ENCODE measurements at regions of chr4 and their contacts with region 1.

Region 1: GRCh38 chr4:86924811-86925210 is 10.0 kb upstream of the AFF1 start:
- DNase-seq: no peak
- ATAC-seq: no peak
- H3K4me3 Mint-ChIP-seq: no peak overlapping the region
- H3K27ac Mint-ChIP-seq: no peak overlapping the region
- H3K4me1 Mint-ChIP-seq: peaks cover 20% of the 10 kb centered on the region
- H3K27me3 Mint-ChIP-seq: no peaks in the 10 kb centered on the region
- CTCF ChIP-seq: no peak

Region 2: DNA sequence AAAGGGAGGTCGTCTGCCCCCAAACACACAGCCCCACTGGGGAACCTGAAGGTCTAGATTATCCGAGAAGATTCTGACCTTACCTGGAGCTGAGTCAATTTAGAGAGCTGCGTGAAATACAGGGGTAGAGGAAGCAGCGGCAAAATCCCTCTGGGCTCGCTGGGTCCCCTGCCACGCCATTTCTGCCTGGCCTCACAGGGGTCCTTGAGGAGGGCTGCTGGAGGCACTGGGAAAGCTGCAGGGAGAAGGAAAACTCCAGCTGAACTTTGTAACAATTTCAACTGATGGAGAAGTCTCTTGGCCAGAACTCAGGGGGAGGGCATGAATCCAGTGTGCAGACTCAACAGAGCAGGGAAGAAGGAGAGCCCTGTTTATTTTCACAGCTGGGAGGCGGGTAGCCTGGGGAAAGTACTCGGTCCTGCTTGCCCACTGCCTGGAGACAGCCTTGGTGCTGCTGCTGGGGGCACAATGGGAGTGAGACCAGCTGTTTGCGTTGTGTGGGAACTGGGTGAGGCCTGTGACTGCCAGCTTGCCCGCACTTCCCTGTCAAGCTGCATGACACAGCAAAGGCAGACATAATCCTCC is 471.8 kb before region 1 on chr4:
- CTCF ChIA-PET with region 1: no interaction called
- POLR2A ChIA-PET with region 1: no interaction called
- intact Hi-C with region 1: no loop called
- DNase-seq: no peak
- ATAC-seq: no peak
- H3K4me3 Mint-ChIP-seq: no peak overlapping the region
- H3K27ac Mint-ChIP-seq: no peak overlapping the region
- H3K4me1 Mint-ChIP-seq: no peaks in the 10 kb centered on the region
- H3K27me3 Mint-ChIP-seq: no peaks in the 10 kb centered on the region
- CTCF ChIP-seq: no peak

Region 3: DNA sequence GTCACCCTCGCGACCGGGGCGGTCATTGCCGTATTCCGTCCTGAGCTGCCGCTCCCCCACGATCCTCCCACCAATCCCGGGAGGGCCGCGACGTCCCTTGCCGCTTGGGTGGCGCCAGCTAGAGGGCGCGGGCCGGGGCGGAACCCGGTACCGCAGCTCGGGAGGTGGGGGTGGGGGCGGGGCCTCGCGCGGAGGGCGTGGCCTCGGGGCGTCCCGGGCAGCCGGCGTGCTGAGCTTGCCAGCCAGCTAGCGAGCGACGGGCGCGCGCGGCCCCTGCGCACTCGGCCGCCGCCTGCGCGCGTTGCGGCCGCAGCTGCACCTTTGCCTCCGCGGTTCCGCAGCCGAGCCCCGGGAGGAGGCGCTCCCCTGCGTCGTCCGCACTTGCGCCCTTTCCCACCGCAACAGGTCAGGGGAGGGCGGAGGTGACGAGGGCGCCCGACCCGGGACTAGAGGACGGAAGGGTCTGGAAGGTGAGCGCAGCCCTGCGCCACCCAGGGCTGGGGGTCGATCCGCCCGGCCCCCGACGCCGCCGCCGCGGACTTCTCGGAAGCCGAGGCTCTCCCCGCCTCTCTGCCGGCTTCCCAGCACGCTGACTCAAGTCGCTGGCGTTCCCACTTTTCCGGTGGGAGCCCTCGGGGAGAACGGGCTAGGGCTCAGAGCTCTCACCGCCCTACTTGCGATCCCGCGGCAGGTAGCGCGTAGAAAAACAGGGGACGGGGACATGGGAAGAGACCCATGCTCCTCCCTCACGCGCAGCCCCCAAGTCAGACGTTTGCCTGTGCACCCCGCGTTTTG is 10.2 kb after region 1 on chr4 and contains the start of gene AFF1:
- CTCF ChIA-PET with region 1: interaction called, 45 read pairs
- POLR2A ChIA-PET with region 1: interaction called, 5 read pairs
- intact Hi-C with region 1: no loop called
- DNase-seq: peak; percentile 92
- ATAC-seq: peak; percentile 83
- H3K4me3 Mint-ChIP-seq: peak within 1 kb of the TSS; percentile 90
- H3K27ac Mint-ChIP-seq: peak within 1 kb of the TSS; percentile 95
- H3K4me1 Mint-ChIP-seq: peaks cover 43% of the 10 kb centered on the region
- H3K27me3 Mint-ChIP-seq: no peaks in the 10 kb centered on the region
- CTCF ChIP-seq: peak; percentile 38
- total RNA-seq, gene AFF1: 40.3 to 45.4 TPM

Region 4: GRCh38 chr4:87024666-87025613 is 100.1 kb after region 1 on chr4:
- CTCF ChIA-PET with region 1: no interaction called
- POLR2A ChIA-PET with region 1: no interaction called
- intact Hi-C with region 1: no loop called
- DNase-seq: no peak
- ATAC-seq: no peak
- H3K4me3 Mint-ChIP-seq: no peak overlapping the region
- H3K27ac Mint-ChIP-seq: no peak overlapping the region
- H3K4me1 Mint-ChIP-seq: peaks cover 61% of the 10 kb centered on the region
- H3K27me3 Mint-ChIP-seq: no peaks in the 10 kb centered on the region
- CTCF ChIP-seq: no peak

Region 5: DNA sequence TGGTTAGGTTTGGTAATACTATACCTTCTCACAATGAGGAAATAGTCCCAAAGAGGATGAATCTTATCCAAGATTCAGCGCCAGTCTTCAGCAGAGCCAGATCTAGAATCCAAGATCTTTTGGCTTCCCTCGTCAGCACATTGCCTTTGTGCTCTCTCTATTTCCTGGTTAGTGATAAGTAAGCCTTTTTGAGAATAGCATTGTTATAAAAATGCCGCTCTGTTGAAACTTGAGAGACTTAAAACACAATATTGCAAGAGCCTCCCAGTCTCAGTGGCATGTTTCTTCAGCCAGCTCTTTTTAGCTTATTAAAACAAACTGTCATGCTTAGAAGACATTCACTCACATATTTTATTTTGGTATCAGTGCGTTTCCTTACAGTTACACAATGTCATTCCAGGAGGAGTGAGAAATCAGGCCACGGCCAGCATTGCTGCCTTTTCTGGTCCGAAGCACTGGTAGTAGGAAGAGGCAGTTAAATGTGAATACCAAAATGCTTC is 154.2 kb after region 1 on chr4:
- CTCF ChIA-PET with region 1: interaction called, 11 read pairs
- POLR2A ChIA-PET with region 1: interaction called, 3 read pairs
- intact Hi-C with region 1: no loop called
- DNase-seq: no peak
- ATAC-seq: no peak
- H3K4me3 Mint-ChIP-seq: no peak overlapping the region
- H3K27ac Mint-ChIP-seq: no peak overlapping the region
- H3K4me1 Mint-ChIP-seq: peaks cover 31% of the 10 kb centered on the region
- H3K27me3 Mint-ChIP-seq: no peaks in the 10 kb centered on the region
- CTCF ChIP-seq: no peak

Region 6: DNA sequence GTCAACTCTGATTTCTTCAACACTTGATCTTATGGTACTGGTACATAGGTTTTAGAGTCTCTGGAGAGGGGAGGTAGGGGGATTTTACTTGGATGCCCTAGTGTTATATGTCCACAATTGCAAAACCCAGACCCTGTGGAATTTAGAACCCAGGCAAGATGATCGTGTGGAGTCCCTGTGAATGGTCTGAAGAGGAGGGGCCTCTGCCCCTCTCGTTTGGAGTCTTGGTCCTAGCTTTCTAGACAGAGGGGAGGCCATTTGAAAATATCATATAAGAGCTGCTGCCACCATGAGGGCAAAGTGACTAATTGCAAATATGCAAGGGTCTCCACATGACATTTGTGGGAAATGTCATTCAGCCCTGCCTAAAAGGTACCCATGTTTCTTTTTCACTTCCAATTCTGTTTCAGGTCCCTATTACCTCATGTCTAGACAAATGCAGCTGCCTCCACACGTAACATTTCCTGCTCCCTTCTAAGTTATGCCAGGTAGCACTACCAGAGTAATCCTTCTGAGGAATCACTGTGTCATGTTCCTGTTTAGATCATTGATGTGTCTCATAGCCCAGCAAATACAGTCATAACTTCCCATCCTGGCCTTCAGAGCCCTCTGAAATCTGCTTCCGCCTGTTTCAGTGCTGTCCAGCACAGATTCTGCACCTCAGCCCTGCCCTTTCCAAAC is 168.8 kb after region 1 on chr4:
- CTCF ChIA-PET with region 1: interaction called, 140 read pairs
- POLR2A ChIA-PET with region 1: interaction called, 4 read pairs
- intact Hi-C with region 1: loop called (anchors 1 kb)
- DNase-seq: peak; percentile 57
- ATAC-seq: peak; percentile 90
- H3K4me3 Mint-ChIP-seq: no peak overlapping the region
- H3K27ac Mint-ChIP-seq: peak overlapping the region; percentile 36
- H3K4me1 Mint-ChIP-seq: peaks cover 29% of the 10 kb centered on the region
- H3K27me3 Mint-ChIP-seq: no peaks in the 10 kb centered on the region
- CTCF ChIP-seq: peak; percentile 69

Region 7: DNA sequence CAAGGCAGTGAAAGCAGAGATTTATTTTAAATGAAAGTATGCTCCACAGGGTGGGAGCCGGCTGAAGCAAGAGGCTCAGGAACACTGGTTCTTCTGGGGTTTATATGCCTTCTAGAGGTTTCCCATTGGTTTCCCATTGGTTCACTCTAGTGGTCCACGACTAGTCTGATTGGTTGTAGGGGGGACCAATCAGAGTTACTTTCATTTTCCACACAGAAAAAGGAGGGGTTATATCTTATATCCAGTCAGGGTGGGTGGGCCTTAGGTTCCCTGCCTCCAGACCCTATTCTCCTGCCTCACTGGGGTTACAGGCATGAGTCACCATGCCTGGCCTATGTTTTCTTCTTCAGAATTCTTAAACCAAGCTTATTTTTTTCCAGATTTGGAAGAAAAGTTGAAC is 194.0 kb after region 1 on chr4:
- CTCF ChIA-PET with region 1: interaction called, 12 read pairs
- POLR2A ChIA-PET with region 1: no interaction called
- intact Hi-C with region 1: no loop called
- DNase-seq: peak; percentile 9
- ATAC-seq: peak; percentile 88
- H3K4me3 Mint-ChIP-seq: no peak overlapping the region
- H3K27ac Mint-ChIP-seq: no peak overlapping the region
- H3K4me1 Mint-ChIP-seq: peaks cover 15% of the 10 kb centered on the region
- H3K27me3 Mint-ChIP-seq: no peaks in the 10 kb centered on the region
- CTCF ChIP-seq: no peak

Region 8: DNA sequence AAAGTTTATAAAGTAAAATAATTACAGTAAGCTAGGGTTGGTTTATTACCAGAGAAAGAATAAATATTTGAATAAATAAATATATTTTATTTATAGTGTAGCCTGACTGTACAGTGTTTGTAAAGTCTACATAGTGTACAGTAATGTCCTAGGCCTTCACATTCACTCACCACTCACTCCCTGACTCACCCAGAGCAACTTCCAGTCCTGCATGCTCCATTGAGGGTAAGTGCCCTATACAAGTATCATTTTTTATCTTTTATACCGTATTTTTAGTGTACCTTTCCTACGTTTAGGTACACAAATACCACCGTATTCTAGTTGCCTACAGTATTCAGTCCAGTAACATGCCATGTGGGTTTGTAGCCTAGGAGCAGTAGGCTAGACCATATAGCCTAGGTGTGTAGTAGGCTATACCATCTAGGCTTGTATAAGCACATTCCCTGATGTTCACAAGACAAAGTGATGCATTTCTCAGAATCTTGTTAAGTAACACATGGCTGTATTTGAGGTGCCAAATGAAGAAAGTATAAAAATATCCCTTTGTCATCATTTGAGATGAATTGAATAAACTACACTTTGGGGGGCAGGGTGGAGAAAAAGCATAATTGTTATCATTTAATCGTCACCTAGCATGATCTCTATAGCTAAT is 310.3 kb after region 1 on chr4:
- CTCF ChIA-PET with region 1: interaction called, 8 read pairs
- POLR2A ChIA-PET with region 1: no interaction called
- intact Hi-C with region 1: loop called (anchors 2 kb)
- DNase-seq: no peak
- ATAC-seq: no peak
- H3K4me3 Mint-ChIP-seq: peak overlapping the region; percentile 72
- H3K27ac Mint-ChIP-seq: no peak overlapping the region
- H3K4me1 Mint-ChIP-seq: no peaks in the 10 kb centered on the region
- H3K27me3 Mint-ChIP-seq: peaks cover 3% of the 10 kb centered on the region
- CTCF ChIP-seq: no peak

Measured in activated CD8-positive, alpha-beta T cell treated with anti-CD3 and anti-CD28 coated beads for 36 hours (primary cell).